Activated CD8-positive, alpha-beta memory T cell treated with anti-CD3 and anti-CD28 coated beads, Interleukin-2, amount 10 ng/mL, durations not matched to agents 7 days and 5 days (primary cell): ENCODE measurements at regions of chrX and their contacts with region 1.

Region 1: DNA sequence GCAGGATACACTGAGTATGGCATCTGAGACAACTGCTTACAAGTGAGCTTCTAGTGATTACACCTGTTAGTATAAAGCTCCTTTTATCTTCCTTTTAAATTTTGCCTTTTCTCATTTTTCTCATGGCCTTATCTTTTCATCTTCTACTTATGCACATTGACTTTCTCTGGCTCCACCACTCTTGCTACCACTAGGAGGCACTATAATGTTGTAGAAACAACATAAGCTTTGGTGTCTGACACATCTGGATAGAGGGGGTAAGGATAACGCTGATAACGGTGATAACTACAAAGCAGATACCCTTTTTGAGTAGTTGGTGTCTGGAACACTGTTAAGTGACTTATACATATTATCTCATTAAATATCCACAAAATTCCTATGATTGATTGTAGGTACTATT is 187.4 kb upstream of the TEX13C start:
- DNase-seq: no peak
- ATAC-seq: no peak
- H3K4me3 Mint-ChIP-seq: no peak overlapping the region
- H3K27ac Mint-ChIP-seq: no peak overlapping the region
- H3K4me1 Mint-ChIP-seq: no peaks in the 10 kb centered on the region
- H3K27me3 Mint-ChIP-seq: no peaks in the 10 kb centered on the region

Region 2: DNA sequence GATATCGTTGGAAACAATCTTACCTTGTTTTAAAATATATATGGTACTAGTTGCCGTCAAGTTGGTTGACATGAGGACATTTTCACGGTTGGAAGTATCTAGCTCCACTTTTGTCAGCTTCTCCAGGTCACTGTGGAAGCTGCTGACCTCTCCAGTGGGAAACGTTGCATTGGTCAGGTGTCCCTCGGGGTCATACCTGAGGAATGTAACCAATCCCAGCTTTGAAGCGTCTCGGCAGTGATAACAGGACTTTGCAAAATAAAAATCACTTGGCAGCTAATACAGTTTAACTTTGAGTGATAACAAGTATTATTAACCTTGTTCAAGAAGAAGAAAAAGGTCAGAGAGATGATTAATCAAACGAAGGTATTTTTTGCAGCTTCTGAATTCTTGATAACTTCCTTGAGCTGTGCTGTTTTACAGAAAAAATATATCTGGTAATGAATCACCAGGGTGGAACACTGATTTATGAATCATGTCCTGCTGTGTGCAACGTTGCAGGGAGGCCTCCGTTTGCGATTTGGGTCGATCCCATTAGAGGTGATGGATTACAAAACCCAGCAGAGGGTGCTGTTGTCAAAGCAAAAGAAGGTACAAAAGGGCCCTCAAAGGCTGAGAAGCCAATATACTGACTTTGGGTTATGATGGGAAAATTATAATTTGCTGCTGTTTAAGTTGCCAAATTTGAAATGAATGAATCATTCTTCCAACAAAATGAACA is 725.8 kb before region 1 on chrX:
- CTCF ChIA-PET with region 1: interaction called, 22 read pairs
- DNase-seq: peak; percentile 68
- ATAC-seq: peak; percentile 83
- H3K4me3 Mint-ChIP-seq: no peak overlapping the region
- H3K27ac Mint-ChIP-seq: no peak overlapping the region
- H3K4me1 Mint-ChIP-seq: peaks cover 4% of the 10 kb centered on the region
- H3K27me3 Mint-ChIP-seq: no peaks in the 10 kb centered on the region

Region 3: DNA sequence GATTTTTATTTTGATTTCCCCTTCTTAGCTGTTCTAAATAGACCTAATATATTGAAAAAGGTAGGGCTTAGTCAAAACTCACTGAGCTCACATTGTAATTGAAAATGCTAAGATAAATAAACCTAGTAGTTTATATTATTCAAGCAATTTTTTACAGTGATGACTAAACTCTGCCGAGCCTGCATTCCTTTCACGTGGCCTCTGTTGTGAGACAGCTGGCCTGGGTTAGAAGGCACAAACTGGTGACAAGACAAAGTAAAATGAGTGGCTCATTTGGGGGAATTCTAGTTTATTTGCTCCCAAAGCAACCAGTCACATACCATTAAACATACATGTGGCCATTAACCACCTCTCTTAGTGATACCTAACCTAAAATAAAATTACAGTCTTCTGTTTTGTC is 17.9 kb after region 1 on chrX:
- CTCF ChIA-PET with region 1: no interaction called
- DNase-seq: no peak
- ATAC-seq: no peak
- H3K4me3 Mint-ChIP-seq: no peak overlapping the region
- H3K27ac Mint-ChIP-seq: no peak overlapping the region
- H3K4me1 Mint-ChIP-seq: no peaks in the 10 kb centered on the region
- H3K27me3 Mint-ChIP-seq: no peaks in the 10 kb centered on the region